ENCODE measurements at regions of chr9 and their contacts with region 1.

Region 1: GRCh38 chr9:112443200-112443599 is 43.4 kb upstream of the KIAA1958 start:
- DNase-seq: peak; percentile 39
- H3K4me3 ChIP-seq: no peak overlapping the region
- H3K27ac ChIP-seq: no peak overlapping the region
- H3K4me1 ChIP-seq: no peaks in the 10 kb centered on the region
- H3K27me3 ChIP-seq: no peaks in the 10 kb centered on the region
- CTCF ChIP-seq: peak; percentile 26 to 32
- POLR2A ChIP-seq: no peak

Region 2: DNA sequence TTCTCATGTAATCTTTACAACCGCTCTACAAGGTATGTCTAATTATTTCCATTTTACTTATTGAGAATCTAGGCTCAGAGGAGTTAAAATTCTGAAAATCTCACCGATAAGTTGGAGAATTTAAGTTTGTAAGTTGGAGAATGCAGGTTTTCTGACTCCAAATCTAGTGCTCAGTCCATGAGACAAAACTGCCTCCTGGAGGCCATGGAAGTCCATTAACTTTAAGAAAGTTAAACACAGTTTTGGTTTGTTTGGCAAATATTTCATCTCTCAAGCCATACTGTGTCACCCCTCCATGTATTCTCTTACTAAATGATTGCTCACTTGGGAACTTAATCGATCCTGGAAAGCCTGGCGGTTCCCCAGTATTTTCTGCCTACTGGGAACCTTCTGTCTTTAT is 222.1 kb after region 1 on chr9:
- CTCF ChIA-PET with region 1: interaction called, 12 read pairs
- POLR2A ChIA-PET with region 1: no interaction called
- dilution Hi-C with region 1: no loop called
- intact Hi-C with region 1: loop called (anchors 1 kb)
- DNase-seq: no peak
- H3K4me3 ChIP-seq: no peak overlapping the region
- H3K27ac ChIP-seq: no peak overlapping the region
- H3K4me1 ChIP-seq: no peaks in the 10 kb centered on the region
- H3K27me3 ChIP-seq: no peaks in the 10 kb centered on the region
- CTCF ChIP-seq: no peak
- POLR2A ChIP-seq: no peak

Region 3: DNA sequence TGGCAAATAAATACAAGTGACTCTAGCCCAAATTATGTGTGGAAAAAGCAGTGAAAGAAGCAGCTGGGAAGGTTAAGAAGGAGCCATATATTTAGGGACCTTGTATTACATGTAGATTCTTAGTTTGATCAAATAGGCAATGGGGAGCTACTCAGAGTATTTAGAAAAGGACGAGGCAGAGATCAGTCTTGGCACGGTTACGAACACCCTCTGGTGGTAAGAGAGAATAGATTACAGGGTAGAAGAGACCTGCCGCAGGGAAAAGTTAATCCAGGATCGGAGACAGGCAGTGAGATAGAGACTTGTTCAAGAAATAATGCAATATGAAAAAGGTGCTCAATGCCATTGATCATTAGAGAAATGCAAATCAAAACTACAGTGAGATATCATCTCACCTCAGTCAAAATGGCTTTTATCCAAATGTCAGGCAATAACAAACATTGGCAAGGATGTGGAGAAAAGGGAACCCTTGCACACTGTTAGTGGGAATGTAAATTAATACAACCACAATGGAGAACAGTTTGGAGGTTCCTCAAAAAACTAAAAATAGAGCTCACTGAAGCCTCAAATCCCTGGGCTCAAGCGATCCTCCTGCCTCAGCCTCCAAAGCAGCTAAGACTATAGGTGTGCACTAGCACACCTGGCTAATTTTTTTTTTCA is 262.7 kb after region 1 on chr9:
- CTCF ChIA-PET with region 1: interaction called, 13 read pairs
- POLR2A ChIA-PET with region 1: no interaction called
- dilution Hi-C with region 1: no loop called
- intact Hi-C with region 1: loop called (anchors 2 kb)
- DNase-seq: peak; percentile 27
- H3K4me3 ChIP-seq: no peak overlapping the region
- H3K27ac ChIP-seq: no peak overlapping the region
- H3K4me1 ChIP-seq: no peaks in the 10 kb centered on the region
- H3K27me3 ChIP-seq: no peaks in the 10 kb centered on the region
- CTCF ChIP-seq: peak in 1 of 2 donors; percentile 16
- POLR2A ChIP-seq: no peak

Region 4: GRCh38 chr9:112711050-112711689 is 268.0 kb after region 1 on chr9:
- CTCF ChIA-PET with region 1: interaction called, 13 read pairs
- POLR2A ChIA-PET with region 1: no interaction called
- dilution Hi-C with region 1: no loop called
- intact Hi-C with region 1: no loop called
- DNase-seq: peak; percentile 40
- H3K4me3 ChIP-seq: no peak overlapping the region
- H3K27ac ChIP-seq: no peak overlapping the region
- H3K4me1 ChIP-seq: no peaks in the 10 kb centered on the region
- H3K27me3 ChIP-seq: no peaks in the 10 kb centered on the region
- CTCF ChIP-seq: peak; percentile 42 to 48
- POLR2A ChIP-seq: no peak

Region 5: GRCh38 chr9:112793213-112793810 is 350.1 kb after region 1 on chr9:
- CTCF ChIA-PET with region 1: interaction called, 11 read pairs
- POLR2A ChIA-PET with region 1: no interaction called
- dilution Hi-C with region 1: no loop called
- intact Hi-C with region 1: loop called (anchors 1 kb)
- DNase-seq: peak; percentile 57
- H3K4me3 ChIP-seq: no peak overlapping the region
- H3K27ac ChIP-seq: no peak overlapping the region
- H3K4me1 ChIP-seq: no peaks in the 10 kb centered on the region
- H3K27me3 ChIP-seq: no peaks in the 10 kb centered on the region
- CTCF ChIP-seq: peak; percentile 67 to 80
- POLR2A ChIP-seq: no peak

Region 6: DNA sequence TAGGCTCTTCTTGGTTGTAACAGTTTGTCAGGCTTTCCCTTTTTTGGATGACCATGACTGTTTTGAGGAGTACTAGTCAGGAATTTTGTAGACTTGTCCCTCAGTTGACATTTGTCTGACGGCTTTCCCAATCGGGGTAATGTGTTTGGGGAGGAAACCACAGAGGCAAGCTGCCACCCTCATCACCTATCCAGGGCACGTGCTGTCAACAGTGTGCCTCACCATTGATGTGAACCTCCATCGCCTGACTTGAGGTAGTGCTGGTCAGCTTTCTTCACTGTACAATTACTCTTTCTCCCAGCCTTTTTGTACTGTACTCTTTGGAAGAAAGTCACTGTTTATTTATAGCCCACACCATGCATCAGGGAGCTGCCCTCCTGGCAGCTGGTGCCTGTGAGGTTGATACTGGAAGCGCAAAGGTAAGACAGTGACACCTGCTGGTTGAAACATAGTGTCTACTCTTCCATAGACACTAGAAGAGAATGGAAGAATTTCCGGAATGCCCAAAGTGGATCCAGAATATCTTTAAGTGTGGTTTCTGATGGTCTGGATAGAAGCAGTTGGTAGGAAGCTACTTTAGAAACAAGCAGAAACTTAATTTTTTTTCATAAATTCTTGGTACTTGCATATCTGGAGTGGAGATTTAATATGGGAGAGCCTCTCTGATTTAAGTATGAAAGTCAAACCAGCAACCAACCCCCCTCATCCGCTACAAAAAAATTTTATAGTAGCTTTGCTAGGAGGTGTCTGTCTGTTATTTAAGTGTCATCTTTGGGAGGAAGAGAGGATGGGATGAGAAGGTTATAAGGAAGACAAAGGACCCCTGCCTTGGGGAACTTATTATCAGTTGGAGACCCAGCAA is 376.7 kb after region 1 on chr9:
- CTCF ChIA-PET with region 1: interaction called, 9 read pairs
- POLR2A ChIA-PET with region 1: no interaction called
- dilution Hi-C with region 1: no loop called
- intact Hi-C with region 1: loop called (anchors 1 kb)
- DNase-seq: peak; percentile 50
- H3K4me3 ChIP-seq: no peak overlapping the region
- H3K27ac ChIP-seq: no peak overlapping the region
- H3K4me1 ChIP-seq: no peaks in the 10 kb centered on the region
- H3K27me3 ChIP-seq: no peaks in the 10 kb centered on the region
- CTCF ChIP-seq: peak; percentile 55 to 60
- POLR2A ChIP-seq: no peak